Activated CD4-positive, alpha-beta T cell treated with anti-CD3 and anti-CD28 coated beads for 36 hours (primary cell): ENCODE measurements at regions of chr22 and their contacts with region 1.

Region 1: GRCh38 chr22:23178512-23179254 is 1.6 kb upstream of the BCR start:
- DNase-seq: peak; percentile 77
- ATAC-seq: no peak
- H3K4me3 Mint-ChIP-seq: peak overlapping the region; percentile 58
- H3K27ac Mint-ChIP-seq: no peak overlapping the region
- H3K4me1 Mint-ChIP-seq: peaks cover 39% of the 10 kb centered on the region
- H3K27me3 Mint-ChIP-seq: no peaks in the 10 kb centered on the region

Region 2: DNA sequence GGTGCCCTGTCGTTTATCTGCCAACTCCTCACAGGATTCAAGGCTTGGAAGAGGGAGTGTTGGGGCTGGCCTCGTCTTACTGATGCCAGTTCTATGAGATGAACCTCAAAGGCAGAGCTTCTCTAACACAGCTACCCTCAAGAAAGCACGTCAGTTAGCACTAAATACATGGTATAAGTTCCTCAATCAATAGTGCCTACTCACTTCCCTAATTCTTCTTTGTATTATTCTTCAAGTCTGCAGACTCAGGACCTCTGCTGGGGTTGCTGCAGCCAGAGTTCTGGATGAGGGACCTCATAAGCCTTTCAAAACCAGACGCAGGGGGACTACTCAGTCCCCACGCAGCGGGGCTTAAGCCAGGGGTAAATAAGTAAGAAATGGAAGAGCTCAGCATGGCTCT is 815.7 kb before region 1 on chr22:
- CTCF ChIA-PET with region 1: no interaction called
- POLR2A ChIA-PET with region 1: no interaction called
- intact Hi-C with region 1: no loop called
- DNase-seq: no peak
- ATAC-seq: no peak
- H3K4me3 Mint-ChIP-seq: no peak overlapping the region
- H3K27ac Mint-ChIP-seq: no peak overlapping the region
- H3K4me1 Mint-ChIP-seq: no peaks in the 10 kb centered on the region
- H3K27me3 Mint-ChIP-seq: peaks cover 29% of the 10 kb centered on the region

Region 3: DNA sequence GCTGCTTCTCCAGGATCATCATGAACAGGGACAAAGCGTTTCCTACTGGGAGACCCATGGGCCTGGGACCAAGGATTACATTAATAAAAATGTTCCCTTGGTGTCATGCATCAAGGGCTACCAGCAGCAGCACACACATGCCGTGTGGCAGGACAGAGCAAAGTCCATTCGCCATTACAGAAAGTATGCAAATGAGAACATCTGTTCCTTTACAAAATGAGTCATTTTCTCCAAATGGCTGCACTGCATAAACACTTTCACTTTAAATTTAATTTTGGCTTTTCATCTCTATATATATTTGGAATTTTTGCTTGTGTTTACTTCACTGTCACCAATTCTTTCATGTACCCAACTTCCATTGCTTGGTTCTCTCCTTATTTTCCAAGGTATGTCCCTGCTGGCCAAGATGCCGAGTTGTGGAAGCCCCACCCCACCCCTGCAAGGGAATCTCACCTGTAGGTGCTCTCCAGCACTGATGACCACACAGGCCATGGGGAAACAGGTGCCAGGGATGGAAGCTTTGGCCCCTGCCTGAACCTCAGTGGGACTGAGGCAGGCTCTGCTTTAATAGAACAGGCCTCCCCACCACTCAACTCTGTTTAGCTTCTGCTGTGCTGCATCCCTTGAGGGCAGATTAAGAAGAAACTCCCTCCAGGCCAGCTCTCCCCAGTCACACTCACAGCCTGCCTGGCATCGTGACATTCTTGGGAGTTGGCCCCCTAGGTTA is 124.0 kb before region 1 on chr22:
- CTCF ChIA-PET with region 1: no interaction called
- POLR2A ChIA-PET with region 1: no interaction called
- intact Hi-C with region 1: no loop called
- DNase-seq: no peak
- ATAC-seq: peak; percentile 36
- H3K4me3 Mint-ChIP-seq: no peak overlapping the region
- H3K27ac Mint-ChIP-seq: no peak overlapping the region
- H3K4me1 Mint-ChIP-seq: peaks cover 2% of the 10 kb centered on the region
- H3K27me3 Mint-ChIP-seq: peaks cover 10% of the 10 kb centered on the region

Region 4: GRCh38 chr22:23119494-23120414 is 58.9 kb before region 1 on chr22:
- CTCF ChIA-PET with region 1: no interaction called
- POLR2A ChIA-PET with region 1: no interaction called
- intact Hi-C with region 1: no loop called
- DNase-seq: peak; percentile 78
- ATAC-seq: peak; percentile 95
- H3K4me3 Mint-ChIP-seq: peak overlapping the region; percentile 33
- H3K27ac Mint-ChIP-seq: peak overlapping the region; percentile 90
- H3K4me1 Mint-ChIP-seq: peaks cover 16% of the 10 kb centered on the region
- H3K27me3 Mint-ChIP-seq: no peaks in the 10 kb centered on the region

Region 5: GRCh38 chr22:23240639-23241389 is 62.1 kb after region 1 on chr22:
- CTCF ChIA-PET with region 1: interaction called, 10 read pairs
- POLR2A ChIA-PET with region 1: interaction called, 14 read pairs
- intact Hi-C with region 1: loop called (anchors 1 kb)
- DNase-seq: peak; percentile 72
- ATAC-seq: peak; percentile 34
- H3K4me3 Mint-ChIP-seq: no peak overlapping the region
- H3K27ac Mint-ChIP-seq: peak overlapping the region; percentile 84
- H3K4me1 Mint-ChIP-seq: peaks cover 93% of the 10 kb centered on the region
- H3K27me3 Mint-ChIP-seq: no peaks in the 10 kb centered on the region

Region 6: DNA sequence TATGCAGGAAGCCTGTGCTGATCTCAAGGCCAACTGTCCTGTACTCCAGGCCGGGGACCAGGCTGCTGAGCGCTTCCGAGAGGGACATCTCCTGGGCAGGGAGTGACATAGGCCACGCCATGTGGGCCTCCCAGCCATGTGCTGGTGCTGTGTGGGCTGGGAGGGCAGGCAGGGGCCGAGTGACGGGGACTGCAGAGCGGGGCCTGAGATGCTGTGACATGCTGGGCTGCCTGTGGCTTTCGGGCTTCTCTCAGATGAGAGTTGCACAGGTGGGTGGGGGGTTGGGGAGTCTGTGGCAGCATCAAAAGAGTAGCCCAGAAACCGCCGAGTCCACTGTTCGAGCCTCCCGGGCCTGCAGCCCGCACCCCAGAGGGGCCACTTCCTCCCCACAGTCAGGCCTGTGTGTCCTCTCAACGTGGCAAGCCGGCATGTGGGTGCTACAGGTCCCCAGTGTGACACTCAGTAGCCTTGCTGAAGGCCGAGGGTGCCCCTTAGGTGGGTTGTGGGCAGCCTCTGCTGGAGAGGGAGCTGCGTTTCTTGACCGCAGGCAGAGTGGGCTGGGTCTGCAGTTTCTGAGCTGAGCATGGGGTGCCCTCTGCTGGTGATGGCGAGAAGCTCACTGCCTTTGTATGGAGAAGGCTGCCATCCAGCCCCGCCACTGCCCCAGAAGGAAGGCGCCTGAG is 102.9 kb after region 1 on chr22:
- CTCF ChIA-PET with region 1: interaction called, 72 read pairs
- POLR2A ChIA-PET with region 1: interaction called, 4 read pairs
- intact Hi-C with region 1: loop called (anchors 1 kb)
- DNase-seq: peak; percentile 89
- ATAC-seq: peak; percentile 71
- H3K4me3 Mint-ChIP-seq: no peak overlapping the region
- H3K27ac Mint-ChIP-seq: no peak overlapping the region
- H3K4me1 Mint-ChIP-seq: peaks cover 25% of the 10 kb centered on the region
- H3K27me3 Mint-ChIP-seq: no peaks in the 10 kb centered on the region

Region 7: GRCh38 chr22:23289851-23290724 is 111.4 kb after region 1 on chr22:
- CTCF ChIA-PET with region 1: interaction called, 35 read pairs
- POLR2A ChIA-PET with region 1: no interaction called
- intact Hi-C with region 1: no loop called
- DNase-seq: peak; percentile 75
- ATAC-seq: peak; percentile 63
- H3K4me3 Mint-ChIP-seq: no peak overlapping the region
- H3K27ac Mint-ChIP-seq: no peak overlapping the region
- H3K4me1 Mint-ChIP-seq: no peaks in the 10 kb centered on the region
- H3K27me3 Mint-ChIP-seq: no peaks in the 10 kb centered on the region

Region 8: GRCh38 chr22:23385291-23386244 is 206.9 kb after region 1 on chr22:
- CTCF ChIA-PET with region 1: interaction called, 6 read pairs
- POLR2A ChIA-PET with region 1: no interaction called
- intact Hi-C with region 1: loop called (anchors 1 to 2 kb)
- DNase-seq: peak; percentile 90
- ATAC-seq: peak; percentile 90
- H3K4me3 Mint-ChIP-seq: no peak overlapping the region
- H3K27ac Mint-ChIP-seq: no peak overlapping the region
- H3K4me1 Mint-ChIP-seq: no peaks in the 10 kb centered on the region
- H3K27me3 Mint-ChIP-seq: peaks cover 2% of the 10 kb centered on the region

Region 9: GRCh38 chr22:23450434-23450795 is 271.7 kb after region 1 on chr22:
- CTCF ChIA-PET with region 1: no interaction called
- POLR2A ChIA-PET with region 1: no interaction called
- intact Hi-C with region 1: no loop called
- DNase-seq: no peak
- ATAC-seq: no peak
- H3K4me3 Mint-ChIP-seq: no peak overlapping the region
- H3K27ac Mint-ChIP-seq: no peak overlapping the region
- H3K4me1 Mint-ChIP-seq: peaks cover 2% of the 10 kb centered on the region
- H3K27me3 Mint-ChIP-seq: peaks cover 5% of the 10 kb centered on the region